Activated CD8-positive, alpha-beta T cell treated with anti-CD3 and anti-CD28 coated beads, Interleukin-2, amount 10 ng/mL, durations not matched to agents 7 days and 5 days (primary cell): ENCODE measurements at regions of chr1 and their contacts with region 1.

Region 1: DNA sequence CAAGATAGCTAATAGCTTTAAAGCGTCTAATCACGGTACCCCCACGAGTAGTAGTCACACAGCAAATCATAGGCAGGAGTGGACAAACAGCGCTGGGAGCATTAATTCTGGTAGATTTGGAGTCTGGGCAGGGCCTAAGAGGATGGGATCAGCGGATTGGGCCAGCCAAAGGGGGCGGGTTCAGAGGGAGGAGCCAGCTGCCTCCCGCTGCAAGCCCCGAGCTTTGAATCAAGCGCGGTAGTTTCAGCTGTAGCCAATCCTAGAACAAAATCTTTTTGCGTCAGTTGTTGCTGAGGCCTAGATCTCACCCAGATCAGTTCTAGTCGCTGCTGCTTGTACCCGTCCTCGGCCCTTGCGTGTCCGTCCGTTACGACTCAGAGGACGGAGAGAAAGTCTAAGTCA is 576 bp upstream of the NASP start:
- DNase-seq: peak; percentile 97
- ATAC-seq: peak; percentile 75
- H3K4me3 Mint-ChIP-seq: peak overlapping the region; percentile 99
- H3K27ac Mint-ChIP-seq: peak overlapping the region; percentile 100
- H3K4me1 Mint-ChIP-seq: peaks cover 26% of the 10 kb centered on the region
- H3K27me3 Mint-ChIP-seq: no peaks in the 10 kb centered on the region

Region 2: DNA sequence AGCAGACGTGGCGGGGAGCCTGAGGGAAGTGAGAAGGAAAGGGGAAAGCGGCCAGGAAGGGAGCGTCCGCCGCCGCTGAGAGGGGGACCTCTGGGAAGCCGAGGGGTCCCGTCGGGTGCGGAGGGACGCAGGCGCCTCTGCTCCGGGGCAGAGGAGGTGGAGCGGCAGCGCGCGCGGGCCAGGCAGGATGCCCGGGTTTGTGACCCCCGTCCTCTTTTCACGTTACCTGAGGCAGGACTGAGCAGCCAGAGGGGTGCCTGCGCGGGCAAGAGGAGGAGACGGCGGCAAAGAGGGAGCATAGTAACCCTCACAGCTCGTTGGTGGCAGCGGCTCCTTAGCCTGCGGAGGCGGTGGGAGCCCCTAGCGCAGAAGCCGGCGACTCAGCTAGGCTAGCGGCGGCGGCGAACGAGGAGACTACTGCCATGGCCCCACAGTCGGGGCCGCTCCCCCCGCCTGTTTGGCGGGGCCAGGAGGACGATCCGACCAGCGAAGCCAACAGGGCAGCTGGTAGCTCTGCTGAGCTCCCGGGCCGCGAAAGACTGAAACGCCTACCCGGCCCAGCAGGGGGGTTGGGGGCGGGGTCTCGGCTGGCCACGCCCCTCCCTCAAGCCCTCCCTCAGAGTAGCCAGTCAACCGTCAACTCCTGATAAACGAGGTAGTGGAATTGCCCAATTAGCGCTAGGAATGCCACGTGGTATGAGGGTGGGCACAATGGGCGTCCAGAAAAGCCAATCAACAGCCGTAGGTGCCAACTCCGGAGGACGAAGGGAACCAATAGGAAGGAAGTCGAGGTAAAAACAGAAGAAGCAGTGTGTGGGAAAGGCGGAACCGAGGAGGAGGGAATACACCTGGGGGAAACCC is 92.4 kb before region 1 on chr1 and contains the start of gene TESK2:
- CTCF ChIA-PET with region 1: interaction called, 7 read pairs
- POLR2A ChIA-PET with region 1: interaction called, 10 read pairs
- DNase-seq: peak; percentile 98
- ATAC-seq: peak; percentile 99
- H3K4me3 Mint-ChIP-seq: no peak within 1 kb of the TSS
- H3K27ac Mint-ChIP-seq: no peak within 1 kb of the TSS
- H3K4me1 Mint-ChIP-seq: peaks cover 12% of the 10 kb centered on the region
- H3K27me3 Mint-ChIP-seq: peaks cover 5% of the 10 kb centered on the region
- total RNA-seq, gene TESK2: 3.3 to 3.5 TPM

Region 3: DNA sequence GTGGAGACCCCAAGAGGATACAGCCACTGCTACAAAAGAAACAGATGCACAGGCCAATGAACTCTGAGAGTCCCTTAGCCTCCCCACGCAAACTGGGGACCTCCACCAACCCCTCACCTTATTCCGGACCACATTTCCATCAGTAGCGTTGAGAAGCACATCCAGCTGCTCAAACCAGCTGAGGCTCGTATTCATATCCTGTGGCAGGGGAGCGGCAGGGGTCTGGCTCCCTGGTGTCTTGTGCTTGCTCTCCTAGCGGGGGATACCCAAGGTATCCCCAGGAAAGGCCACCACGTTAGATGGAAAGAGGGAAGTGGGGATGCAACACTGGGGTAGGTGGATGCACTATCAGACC is 83.9 kb before region 1 on chr1:
- CTCF ChIA-PET with region 1: interaction called, 4 read pairs
- POLR2A ChIA-PET with region 1: interaction called, 19 read pairs
- DNase-seq: no peak
- ATAC-seq: peak; percentile 7
- H3K4me3 Mint-ChIP-seq: peak overlapping the region; percentile 94
- H3K27ac Mint-ChIP-seq: peak overlapping the region; percentile 89
- H3K4me1 Mint-ChIP-seq: peaks cover 28% of the 10 kb centered on the region
- H3K27me3 Mint-ChIP-seq: no peaks in the 10 kb centered on the region

Region 4: GRCh38 chr1:45512641-45513054 is 70.6 kb before region 1 on chr1:
- CTCF ChIA-PET with region 1: interaction called, 18 read pairs
- POLR2A ChIA-PET with region 1: interaction called, 4 read pairs
- DNase-seq: peak; percentile 75
- ATAC-seq: peak; percentile 74
- H3K4me3 Mint-ChIP-seq: no peak overlapping the region
- H3K27ac Mint-ChIP-seq: no peak overlapping the region
- H3K4me1 Mint-ChIP-seq: no peaks in the 10 kb centered on the region
- H3K27me3 Mint-ChIP-seq: no peaks in the 10 kb centered on the region

Region 5: DNA sequence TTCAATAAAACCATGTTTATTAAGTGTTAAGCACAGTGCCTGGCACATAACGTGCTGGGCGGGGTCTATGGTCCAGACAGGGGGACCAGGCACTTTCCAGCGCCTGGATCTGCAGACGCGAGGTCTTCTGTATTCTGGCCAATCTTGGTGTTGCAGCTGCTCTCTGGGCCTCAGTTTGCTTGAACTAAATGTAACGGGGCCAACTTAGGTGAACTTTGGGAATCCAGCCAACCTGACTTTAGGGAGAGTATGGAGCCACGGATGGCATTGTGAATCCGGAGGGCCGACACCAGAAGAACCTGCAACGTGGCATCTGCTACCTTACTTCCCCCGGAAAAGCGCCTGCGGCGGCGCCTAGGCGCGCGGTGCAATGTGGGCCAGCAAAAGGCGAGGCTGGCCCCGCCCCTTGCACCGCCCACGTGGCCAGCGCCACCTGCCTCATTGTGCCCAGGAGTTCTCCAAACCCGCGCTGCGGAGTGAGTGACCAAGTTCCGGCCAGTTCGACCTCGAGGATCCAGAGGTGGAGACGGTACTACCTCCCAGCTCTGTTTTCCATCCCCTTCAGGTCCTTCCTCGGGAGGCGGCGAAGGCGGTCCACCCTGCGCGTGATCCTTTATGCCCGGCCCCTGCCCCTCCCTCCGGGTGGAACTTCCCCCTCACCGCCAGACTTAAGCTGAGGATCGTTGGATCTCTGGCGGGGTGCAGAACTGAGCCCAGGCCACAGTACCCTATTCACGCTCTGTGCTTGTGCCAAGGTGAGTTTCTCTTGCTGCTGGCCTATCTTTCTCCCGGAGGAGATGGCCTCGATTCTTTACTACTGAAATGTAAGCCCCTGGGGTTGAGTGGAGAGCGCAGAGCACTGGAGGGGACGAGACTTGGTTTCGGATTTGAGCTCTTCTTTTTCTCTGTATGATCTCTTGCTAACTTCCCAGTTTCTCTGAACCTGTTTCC is 32.6 kb before region 1 on chr1 and contains the start of gene AKR1A1:
- CTCF ChIA-PET with region 1: interaction called, 4 read pairs
- POLR2A ChIA-PET with region 1: interaction called, 19 read pairs
- DNase-seq: peak; percentile 90
- ATAC-seq: peak; percentile 96
- H3K4me3 Mint-ChIP-seq: peak within 1 kb of the TSS; percentile 94
- H3K27ac Mint-ChIP-seq: peak within 1 kb of the TSS; percentile 91
- H3K4me1 Mint-ChIP-seq: peaks cover 25% of the 10 kb centered on the region
- H3K27me3 Mint-ChIP-seq: no peaks in the 10 kb centered on the region
- total RNA-seq, gene AKR1A1: 150 to 152 TPM

Region 6: DNA sequence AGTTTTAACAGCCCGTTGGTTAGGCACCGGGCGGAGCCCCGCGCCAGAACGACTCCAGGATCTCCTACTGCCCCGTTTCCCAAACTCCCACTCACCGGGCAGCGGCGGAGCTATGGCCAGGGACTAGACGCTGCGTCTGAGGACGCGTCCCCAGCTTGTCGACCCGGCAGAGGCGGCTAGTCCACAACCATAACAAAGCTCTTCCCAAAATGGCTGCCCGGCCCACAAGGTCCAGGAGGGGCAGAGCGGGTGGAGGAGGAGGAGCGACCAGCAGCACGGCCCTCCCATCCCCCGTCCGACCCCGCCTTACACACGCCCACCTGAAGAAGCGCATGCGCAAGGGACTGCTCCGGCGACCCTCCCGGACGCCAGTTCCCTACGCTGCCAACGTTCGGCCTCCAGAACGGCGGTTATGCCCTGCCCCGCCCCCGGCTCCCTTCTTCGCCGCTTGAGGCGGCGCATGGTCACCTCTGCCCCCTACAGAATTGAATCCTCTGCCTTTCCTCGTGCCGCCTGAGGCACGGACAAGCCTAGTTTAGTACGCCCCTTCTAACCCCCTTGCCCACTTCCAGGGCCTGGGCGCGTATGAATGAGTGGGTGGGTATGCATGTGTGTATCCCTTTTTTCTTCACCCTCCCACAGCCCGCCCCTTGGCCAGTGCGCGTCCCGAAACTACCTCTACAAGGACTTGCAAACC is 103.2 kb after region 1 on chr1 and contains the start of gene GPBP1L1:
- CTCF ChIA-PET with region 1: no interaction called
- POLR2A ChIA-PET with region 1: interaction called, 22 read pairs
- DNase-seq: peak; percentile 98
- ATAC-seq: peak; percentile 73
- H3K4me3 Mint-ChIP-seq: peak within 1 kb of the TSS; percentile 99
- H3K27ac Mint-ChIP-seq: peak within 1 kb of the TSS; percentile 99
- H3K4me1 Mint-ChIP-seq: peaks cover 34% of the 10 kb centered on the region
- H3K27me3 Mint-ChIP-seq: no peaks in the 10 kb centered on the region
- total RNA-seq, gene GPBP1L1: 103 to 105 TPM